Activated naive CD4-positive, alpha-beta T cell treated with anti-CD3 and anti-CD28 coated beads for 36 hours (primary cell): ENCODE measurements at regions of chr10 and their contacts with region 1.

Region 1: GRCh38 chr10:22316285-22317120 is at the start of gene COMMD3:
- DNase-seq: peak; percentile 80
- H3K4me3 Mint-ChIP-seq: peak within 1 kb of the TSS; percentile 91
- H3K27ac Mint-ChIP-seq: peak within 1 kb of the TSS; percentile 86
- H3K4me1 Mint-ChIP-seq: peaks cover 30% of the 10 kb centered on the region
- H3K27me3 Mint-ChIP-seq: peaks cover 18% of the 10 kb centered on the region
- total RNA-seq, gene COMMD3: 64.5 to 69.4 TPM

Region 2: GRCh38 chr10:21533467-21534279 is 782.8 kb before region 1 on chr10 and contains the start of gene MLLT10:
- CTCF ChIA-PET with region 1: no interaction called
- intact Hi-C with region 1: loop called (anchors 5 kb)
- DNase-seq: peak; percentile 91
- H3K4me3 Mint-ChIP-seq: peak within 1 kb of the TSS; percentile 85
- H3K27ac Mint-ChIP-seq: peak within 1 kb of the TSS; percentile 91
- H3K4me1 Mint-ChIP-seq: peaks cover 23% of the 10 kb centered on the region
- H3K27me3 Mint-ChIP-seq: no peaks in the 10 kb centered on the region
- total RNA-seq, gene MLLT10: 23.0 to 23.7 TPM

Region 3: GRCh38 chr10:22251751-22252223 is 64.7 kb before region 1 on chr10:
- CTCF ChIA-PET with region 1: interaction called, 6 read pairs
- intact Hi-C with region 1: loop called (anchors 1 kb)
- DNase-seq: peak; percentile 74
- H3K4me3 Mint-ChIP-seq: peak overlapping the region; percentile 99
- H3K27ac Mint-ChIP-seq: peak overlapping the region; percentile 99
- H3K4me1 Mint-ChIP-seq: peaks cover 34% of the 10 kb centered on the region
- H3K27me3 Mint-ChIP-seq: peaks cover 5% of the 10 kb centered on the region

Region 4: DNA sequence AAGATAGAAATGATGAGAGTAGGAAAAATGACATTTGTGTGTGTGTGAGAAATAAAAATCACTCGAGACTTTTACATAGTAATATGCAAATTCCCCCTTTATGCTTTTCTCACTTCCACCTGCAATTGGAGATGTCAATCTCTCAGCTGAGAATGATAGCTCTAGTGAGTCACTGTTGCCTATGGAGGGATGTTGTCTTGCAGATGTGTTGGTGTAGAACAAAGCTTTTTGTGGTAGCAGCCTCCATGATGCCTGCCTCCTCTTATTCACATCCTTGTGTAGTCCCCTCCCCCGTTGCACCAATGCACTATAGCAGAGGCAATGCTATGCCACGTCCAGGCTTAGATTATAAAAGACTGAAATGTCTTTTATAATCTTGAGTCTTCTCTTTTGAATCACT is 62.6 kb after region 1 on chr10:
- CTCF ChIA-PET with region 1: no interaction called
- intact Hi-C with region 1: loop called (anchors 2 kb)
- DNase-seq: peak; percentile 75
- H3K4me3 Mint-ChIP-seq: no peak overlapping the region
- H3K27ac Mint-ChIP-seq: no peak overlapping the region
- H3K4me1 Mint-ChIP-seq: peaks cover 17% of the 10 kb centered on the region
- H3K27me3 Mint-ChIP-seq: peaks cover 3% of the 10 kb centered on the region

Region 5: GRCh38 chr10:22655311-22655981 is 338.9 kb after region 1 on chr10:
- CTCF ChIA-PET with region 1: no interaction called
- intact Hi-C with region 1: loop called (anchors 5 kb)
- DNase-seq: peak; percentile 69
- H3K4me3 Mint-ChIP-seq: peak overlapping the region; percentile 46
- H3K27ac Mint-ChIP-seq: peak overlapping the region; percentile 89
- H3K4me1 Mint-ChIP-seq: peaks cover 99% of the 10 kb centered on the region
- H3K27me3 Mint-ChIP-seq: no peaks in the 10 kb centered on the region

Region 6: GRCh38 chr10:23368816-23369640 is 1052.5 kb after region 1 on chr10:
- CTCF ChIA-PET with region 1: no interaction called
- intact Hi-C with region 1: loop called (anchors 10 kb)
- DNase-seq: peak; percentile 24
- H3K4me3 Mint-ChIP-seq: peak overlapping the region; percentile 14
- H3K27ac Mint-ChIP-seq: peak overlapping the region; percentile 73
- H3K4me1 Mint-ChIP-seq: peaks cover 63% of the 10 kb centered on the region
- H3K27me3 Mint-ChIP-seq: no peaks in the 10 kb centered on the region